Naive thymus-derived CD4-positive, alpha-beta T cell (primary cell): ENCODE measurements at regions of chr10 and their contacts with region 1.

Region 1: GRCh38 chr10:60778214-60779029 is at the start of gene CDK1:
- DNase-seq: peak; percentile 80 to 96 (median 92)
- ATAC-seq: peak; percentile 99
- H3K4me3 ChIP-seq: peak within 1 kb of the TSS; percentile 80
- H3K4me3 Mint-ChIP-seq: peak within 1 kb of the TSS; percentile 93 to 98 (median 96)
- H3K27ac ChIP-seq: peak within 1 kb of the TSS; percentile 55
- H3K27ac Mint-ChIP-seq: peak within 1 kb of the TSS; percentile 1 to 97 (median 80)
- H3K4me1 ChIP-seq: no peaks in the 10 kb centered on the region
- H3K4me1 Mint-ChIP-seq: peaks cover 6 to 40% (median 15%) of the 10 kb centered on the region in 7 donors
- H3K27me3 ChIP-seq: no peaks in the 10 kb centered on the region
- H3K27me3 Mint-ChIP-seq: peaks cover 0 to 3% (median 0%) of the 10 kb centered on the region in 5 donors
- total RNA-seq, gene CDK1: 0.50 to 90.7 (median 1.1) TPM

Region 2: DNA sequence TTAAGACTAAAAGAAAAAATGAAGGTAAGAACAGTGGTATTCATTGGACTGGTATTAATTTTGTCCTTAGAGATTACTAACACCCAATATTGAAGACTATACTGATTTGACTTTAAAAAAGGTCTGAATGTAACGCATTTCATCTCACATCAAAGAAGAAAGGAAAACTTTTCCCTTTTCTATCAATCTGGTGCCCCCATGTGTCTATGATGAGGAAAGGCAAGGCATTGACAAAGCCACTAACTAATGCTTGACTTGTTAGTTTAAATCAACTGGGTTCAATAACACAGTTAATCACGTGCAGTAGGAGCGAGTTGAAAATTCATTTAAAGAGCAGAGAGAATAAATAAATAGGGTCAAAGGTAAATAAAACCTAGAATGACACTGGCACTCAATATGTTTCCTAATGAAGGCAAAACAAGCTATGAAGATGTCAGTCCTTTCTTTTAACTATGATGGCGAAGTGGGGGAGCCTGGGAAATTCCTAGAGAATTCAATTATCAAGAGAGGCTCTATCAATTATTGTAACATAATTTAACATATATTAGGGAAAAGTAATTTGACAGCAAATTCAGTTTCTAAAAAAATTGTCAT is 569.6 kb before region 1 on chr10:
- CTCF ChIA-PET with region 1: no interaction called
- POLR2A ChIA-PET with region 1: no interaction called
- intact Hi-C with region 1: loop called in 1 of 2 experiments (anchors 10 kb)
- DNase-seq: no peak
- ATAC-seq: no peak
- H3K4me3 ChIP-seq: no peak overlapping the region
- H3K4me3 Mint-ChIP-seq: no peak overlapping the region
- H3K27ac ChIP-seq: no peak overlapping the region
- H3K27ac Mint-ChIP-seq: peak overlapping the region in 1 of 9 donors; percentile 72
- H3K4me1 ChIP-seq: peaks cover 0 to 11% of the 10 kb centered on the region in 2 donors
- H3K4me1 Mint-ChIP-seq: peaks cover 12 to 37% (median 28%) of the 10 kb centered on the region in 7 donors
- H3K27me3 ChIP-seq: no peaks in the 10 kb centered on the region
- H3K27me3 Mint-ChIP-seq: no peaks in the 10 kb centered on the region

Region 3: GRCh38 chr10:60728056-60728455 is 50.4 kb before region 1 on chr10:
- CTCF ChIA-PET with region 1: no interaction called
- POLR2A ChIA-PET with region 1: interaction called, 4 read pairs
- intact Hi-C with region 1: loop called (anchors 1 to 2 kb)
- DNase-seq: peak in 7 of 9 donors; percentile 51 to 85 (median 78)
- ATAC-seq: peak; percentile 73
- H3K4me3 ChIP-seq: peak overlapping the region; percentile 57
- H3K4me3 Mint-ChIP-seq: peak overlapping the region; percentile 74 to 94 (median 83)
- H3K27ac ChIP-seq: peak overlapping the region; percentile 89
- H3K27ac Mint-ChIP-seq: peak overlapping the region; percentile 84 to 98 (median 94)
- H3K4me1 ChIP-seq: peaks cover 28 to 64% of the 10 kb centered on the region in 2 donors
- H3K4me1 Mint-ChIP-seq: peaks cover 35 to 86% (median 77%) of the 10 kb centered on the region in 7 donors
- H3K27me3 ChIP-seq: no peaks in the 10 kb centered on the region
- H3K27me3 Mint-ChIP-seq: peaks cover 0 to 7% (median 0%) of the 10 kb centered on the region in 5 donors

Region 4: GRCh38 chr10:60733189-60733822 is 45.1 kb before region 1 on chr10:
- CTCF ChIA-PET with region 1: no interaction called
- POLR2A ChIA-PET with region 1: interaction called, 4 read pairs
- intact Hi-C with region 1: loop called (anchors 1 to 2 kb)
- DNase-seq: peak; percentile 29 to 66 (median 55)
- ATAC-seq: peak; percentile 80
- H3K4me3 ChIP-seq: peak overlapping the region; percentile 63
- H3K4me3 Mint-ChIP-seq: peak overlapping the region; percentile 59 to 96 (median 80)
- H3K27ac ChIP-seq: peak overlapping the region; percentile 89
- H3K27ac Mint-ChIP-seq: peak overlapping the region in 7 of 9 donors; percentile 33 to 98 (median 58)
- H3K4me1 ChIP-seq: peaks cover 17 to 35% of the 10 kb centered on the region in 2 donors
- H3K4me1 Mint-ChIP-seq: peaks cover 15 to 39% (median 31%) of the 10 kb centered on the region in 7 donors
- H3K27me3 ChIP-seq: no peaks in the 10 kb centered on the region
- H3K27me3 Mint-ChIP-seq: peaks cover 0 to 7% (median 2%) of the 10 kb centered on the region in 5 donors

Region 5: DNA sequence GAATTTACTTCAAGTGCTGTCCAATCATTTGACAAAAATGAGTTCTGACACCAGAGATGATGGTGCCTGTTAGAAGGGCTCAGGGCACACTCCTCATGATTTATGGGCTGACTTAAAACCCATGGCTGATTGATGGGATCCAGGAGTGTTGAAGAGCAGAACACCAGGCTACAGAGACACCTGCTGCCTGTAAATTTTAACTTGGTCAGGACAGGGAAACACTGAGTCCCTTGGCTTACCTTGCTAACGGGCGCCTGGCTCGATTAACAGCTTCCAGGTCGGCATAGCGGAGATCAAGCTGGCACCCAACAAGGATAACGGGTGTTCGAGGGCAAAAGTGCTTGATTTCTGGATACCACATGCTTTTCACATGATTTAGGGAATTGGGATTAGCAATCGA is 114.1 kb after region 1 on chr10:
- CTCF ChIA-PET with region 1: no interaction called
- POLR2A ChIA-PET with region 1: no interaction called
- intact Hi-C with region 1: no loop called
- DNase-seq: no peak
- ATAC-seq: no peak
- H3K4me3 ChIP-seq: no peak overlapping the region
- H3K4me3 Mint-ChIP-seq: no peak overlapping the region
- H3K27ac ChIP-seq: no peak overlapping the region
- H3K27ac Mint-ChIP-seq: no peak overlapping the region
- H3K4me1 ChIP-seq: no peaks in the 10 kb centered on the region
- H3K4me1 Mint-ChIP-seq: no peaks in the 10 kb centered on the region
- H3K27me3 ChIP-seq: no peaks in the 10 kb centered on the region
- H3K27me3 Mint-ChIP-seq: peaks cover 5 to 25% (median 17%) of the 10 kb centered on the region in 5 donors

Region 6: DNA sequence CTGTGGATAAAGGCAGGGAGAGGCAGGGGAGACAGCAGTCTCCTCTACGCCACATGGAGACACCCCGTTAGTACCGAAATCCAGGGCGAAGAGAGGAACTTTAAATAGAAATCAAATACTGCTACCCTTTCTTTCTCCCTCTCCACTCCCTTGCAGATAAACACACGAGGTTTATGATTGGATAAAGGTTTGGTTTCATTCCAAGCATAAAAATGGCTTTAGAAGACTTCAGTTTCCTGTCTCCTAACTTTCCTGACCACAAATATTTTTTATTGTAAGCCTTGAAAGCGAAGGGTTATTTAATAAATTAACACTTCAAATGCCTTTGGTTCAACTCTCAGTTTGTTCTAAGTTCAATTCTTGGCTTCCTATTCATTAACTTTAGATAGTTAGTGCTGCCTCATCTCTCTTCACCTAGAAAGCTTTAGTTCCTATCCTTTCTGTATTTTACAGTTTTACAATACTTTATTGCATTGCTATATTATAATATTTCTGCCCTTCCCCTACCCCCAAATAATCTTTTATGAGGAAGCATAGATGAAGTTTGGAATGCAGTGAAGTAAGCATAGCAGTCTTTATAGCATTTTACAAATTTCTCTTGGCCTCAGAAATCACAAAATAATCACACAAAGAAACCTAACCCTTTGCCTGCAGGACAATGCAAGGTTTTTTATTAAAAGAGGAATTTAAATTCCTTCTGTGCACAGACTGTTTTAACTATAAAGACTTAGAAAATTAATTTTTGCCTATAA is 1091.5 kb after region 1 on chr10:
- CTCF ChIA-PET with region 1: no interaction called
- POLR2A ChIA-PET with region 1: no interaction called
- intact Hi-C with region 1: loop called in 1 of 2 experiments (anchors 2 kb)
- DNase-seq: no peak
- ATAC-seq: no peak
- H3K4me3 ChIP-seq: no peak overlapping the region
- H3K4me3 Mint-ChIP-seq: no peak overlapping the region
- H3K27ac ChIP-seq: no peak overlapping the region
- H3K27ac Mint-ChIP-seq: no peak overlapping the region
- H3K4me1 ChIP-seq: no peaks in the 10 kb centered on the region
- H3K4me1 Mint-ChIP-seq: peaks cover 0 to 10% (median 4%) of the 10 kb centered on the region in 7 donors
- H3K27me3 ChIP-seq: peaks cover 0 to 3% of the 10 kb centered on the region in 2 donors
- H3K27me3 Mint-ChIP-seq: peaks cover 0 to 15% (median 3%) of the 10 kb centered on the region in 5 donors